Mammary epithelial cell (primary cell): ENCODE measurements at regions of chr5 and their contacts with region 1.

Region 1: DNA sequence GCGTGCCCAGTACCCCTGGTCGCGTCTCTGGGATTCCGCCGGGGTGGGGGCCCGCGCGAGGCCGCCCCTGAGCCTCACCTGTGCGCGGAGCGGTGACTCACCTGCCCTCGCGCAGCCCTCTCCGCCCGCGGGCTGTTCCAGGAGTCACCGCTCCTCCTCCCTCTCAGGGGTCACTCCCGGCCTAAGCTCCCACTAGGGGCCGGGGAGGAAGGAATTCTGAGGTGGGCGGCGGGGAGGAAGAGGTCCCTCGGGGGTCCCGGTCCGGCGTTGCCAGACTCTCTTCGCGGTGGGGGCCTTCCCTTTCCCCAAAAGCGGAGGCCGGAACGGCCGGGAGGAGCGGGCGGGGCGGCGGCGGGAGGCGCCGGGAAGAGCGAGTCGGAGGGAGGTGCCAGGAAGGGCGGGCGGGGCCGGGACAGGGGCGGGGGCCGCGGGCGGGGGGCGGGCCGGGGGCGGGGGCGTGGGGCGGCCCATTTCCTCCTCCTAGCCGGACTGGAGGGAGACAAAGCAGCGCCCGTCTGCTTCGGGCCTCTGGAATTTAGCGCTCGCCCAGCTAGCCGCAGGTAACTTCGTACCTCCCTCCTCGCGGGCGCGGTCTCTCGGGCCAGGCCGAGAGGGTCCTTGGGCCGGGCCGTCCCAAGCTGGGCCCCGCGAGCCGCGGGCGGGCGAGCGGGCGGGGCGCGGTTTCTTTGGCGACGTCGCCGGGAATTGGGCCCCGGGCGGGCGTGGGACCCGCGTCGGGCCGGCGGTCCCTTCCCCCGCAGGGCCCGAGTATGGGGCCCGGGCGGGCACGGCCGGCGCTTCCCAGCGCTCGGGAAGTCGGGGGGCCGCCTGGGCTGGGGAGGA is at the start of gene CTNNA1:
- DNase-seq: peak; percentile 83
- H3K4me3 ChIP-seq: peak within 1 kb of the TSS; percentile 88 to 99 (median 94)
- H3K27ac ChIP-seq: peak within 1 kb of the TSS; percentile 94
- H3K4me1 ChIP-seq: peaks cover 11% of the 10 kb centered on the region
- H3K27me3 ChIP-seq: no peaks in the 10 kb centered on the region
- CTCF ChIP-seq: no peak
- total RNA-seq, gene CTNNA1: 348 to 366 TPM

Region 2: DNA sequence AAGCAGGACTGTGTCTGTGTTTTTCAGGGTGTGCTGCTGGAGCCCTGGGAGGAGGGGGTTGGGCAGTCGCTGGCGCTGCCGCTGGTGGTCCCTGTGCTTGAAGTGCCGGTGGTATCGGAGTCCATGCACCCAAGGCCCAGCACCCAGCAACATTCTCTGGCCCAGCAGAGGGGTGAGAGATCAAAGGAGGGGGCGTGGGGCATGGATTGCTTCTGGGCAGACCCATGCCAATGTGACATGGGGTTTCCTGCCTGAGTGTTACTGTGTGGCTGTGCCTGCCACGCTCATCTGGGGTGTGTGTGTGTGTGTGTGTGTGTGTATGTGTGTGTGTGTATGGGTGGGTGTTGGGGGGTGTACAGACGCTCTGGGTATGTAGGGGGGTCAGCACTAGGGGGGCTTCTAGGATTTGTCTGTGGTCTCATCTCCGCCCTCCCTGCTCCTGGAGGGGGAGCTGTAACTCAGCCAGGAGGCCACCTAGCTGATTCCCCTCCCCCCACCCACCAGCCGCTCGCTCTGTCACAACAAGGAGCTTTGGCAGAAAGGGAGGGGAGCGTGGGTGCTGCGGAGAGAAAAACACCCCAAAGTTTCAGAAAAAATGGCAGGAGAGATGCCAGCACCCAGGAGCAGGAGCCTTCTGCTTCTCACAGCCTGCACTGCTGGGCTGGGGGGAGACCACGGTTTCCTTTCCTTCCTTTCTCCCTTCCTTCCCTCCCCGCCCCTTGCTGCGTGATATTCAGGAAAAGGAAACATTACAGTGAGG is 142.1 kb before region 1 on chr5:
- CTCF ChIA-PET with region 1: interaction called, 11 read pairs
- dilution Hi-C with region 1: no loop called
- in situ Hi-C with region 1: no loop called
- intact Hi-C with region 1: no loop called
- DNase-seq: no peak
- H3K4me3 ChIP-seq: no peak overlapping the region
- H3K27ac ChIP-seq: no peak overlapping the region
- H3K4me1 ChIP-seq: peaks cover 34% of the 10 kb centered on the region
- H3K27me3 ChIP-seq: no peaks in the 10 kb centered on the region
- CTCF ChIP-seq: no peak

Region 3: DNA sequence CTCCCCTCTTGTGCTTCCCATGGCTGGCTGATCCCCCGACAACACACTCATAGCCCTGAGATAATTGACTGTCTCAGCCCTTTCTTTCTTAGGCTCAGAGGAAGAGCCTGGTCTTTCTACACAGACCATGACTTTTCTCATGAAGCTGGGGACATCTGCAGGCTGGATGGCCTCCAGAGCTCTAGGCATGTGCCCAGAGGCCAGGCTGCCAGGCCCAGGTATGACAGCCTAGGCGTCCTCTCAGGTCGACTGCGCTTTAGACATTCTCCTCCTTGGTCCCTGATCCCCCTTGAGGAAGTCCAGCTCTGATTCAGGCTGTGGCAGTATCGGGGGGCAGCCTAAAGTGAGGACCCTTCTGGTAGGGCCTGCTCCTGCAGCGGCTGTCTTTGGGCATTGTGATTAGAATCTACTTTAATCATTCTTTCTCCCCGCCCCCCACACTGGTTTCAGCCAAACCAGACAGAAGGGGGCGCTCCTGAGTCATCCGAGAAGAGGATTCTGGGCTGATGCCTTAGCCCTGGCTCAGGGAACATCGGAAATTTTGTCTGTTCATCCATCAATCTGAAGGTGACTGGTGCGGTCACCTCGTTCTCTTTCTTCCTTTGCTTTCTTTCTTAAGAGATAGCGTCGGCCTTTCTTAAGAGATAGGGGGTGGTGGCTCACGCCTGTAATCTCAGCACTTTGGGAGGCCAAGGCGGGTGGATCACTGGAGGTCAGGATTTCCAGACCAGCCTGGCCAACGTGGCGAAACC is 111.4 kb before region 1 on chr5:
- CTCF ChIA-PET with region 1: no interaction called
- dilution Hi-C with region 1: no loop called
- in situ Hi-C with region 1: no loop called
- intact Hi-C with region 1: loop called (anchors 5 kb)
- DNase-seq: peak; percentile 51
- H3K4me3 ChIP-seq: no peak overlapping the region
- H3K27ac ChIP-seq: no peak overlapping the region
- H3K4me1 ChIP-seq: peaks cover 5% of the 10 kb centered on the region
- H3K27me3 ChIP-seq: no peaks in the 10 kb centered on the region
- CTCF ChIP-seq: peak; percentile 77 to 79

Region 4: DNA sequence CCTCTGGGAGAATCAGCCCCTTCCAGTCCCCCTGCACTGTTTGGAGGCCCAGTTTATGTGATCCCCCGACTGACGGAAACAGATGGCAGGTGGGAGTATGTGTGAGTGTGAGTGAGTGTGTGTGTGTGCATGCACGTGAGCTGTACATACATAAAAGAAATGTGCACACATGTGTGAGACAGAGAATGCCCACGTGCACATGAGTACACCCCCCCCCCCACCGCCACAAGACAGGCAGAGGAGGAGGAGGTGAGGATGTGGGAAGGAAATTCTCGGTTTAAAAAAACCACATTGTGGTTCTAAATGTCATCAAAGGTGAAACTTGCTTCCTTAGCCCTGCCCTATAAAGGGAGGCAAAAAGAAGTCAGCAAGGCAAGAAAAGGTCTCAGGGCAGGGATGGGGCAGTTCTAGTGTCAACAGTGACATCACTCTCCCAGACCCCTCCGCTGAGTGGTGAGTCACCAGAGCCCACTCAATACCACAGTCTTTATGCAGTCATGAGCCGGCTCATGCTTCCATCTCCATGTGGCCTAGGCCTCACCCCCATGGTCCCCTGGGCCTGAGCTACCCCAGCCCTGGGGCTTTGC is 98.8 kb before region 1 on chr5:
- CTCF ChIA-PET with region 1: no interaction called
- dilution Hi-C with region 1: no loop called
- in situ Hi-C with region 1: no loop called
- intact Hi-C with region 1: loop called (anchors 1 kb)
- DNase-seq: peak; percentile 55
- H3K4me3 ChIP-seq: no peak overlapping the region
- H3K27ac ChIP-seq: no peak overlapping the region
- H3K4me1 ChIP-seq: peaks cover 13% of the 10 kb centered on the region
- H3K27me3 ChIP-seq: no peaks in the 10 kb centered on the region
- CTCF ChIP-seq: no peak

Region 5: DNA sequence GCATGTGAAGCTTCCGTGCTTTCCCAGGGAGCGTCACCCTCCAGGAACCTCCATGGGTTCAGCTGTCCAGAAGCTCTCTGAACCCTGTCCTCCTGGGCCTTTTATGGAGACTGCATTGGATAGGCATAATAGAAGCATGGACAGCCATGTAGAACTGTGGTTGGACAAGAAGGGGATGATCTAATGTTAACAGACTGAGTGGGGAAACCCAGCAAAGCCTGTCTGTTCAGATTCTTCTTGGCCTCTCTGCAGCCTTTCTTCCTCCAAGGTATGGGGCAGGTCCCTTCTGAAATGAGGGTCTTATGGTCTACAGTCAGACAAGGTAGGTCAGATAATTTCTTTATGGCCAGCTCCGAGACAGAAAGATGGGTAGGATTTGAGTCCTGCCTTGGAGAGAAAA is 59.0 kb before region 1 on chr5:
- CTCF ChIA-PET with region 1: no interaction called
- dilution Hi-C with region 1: loop called (anchors 5 kb)
- in situ Hi-C with region 1: no loop called
- intact Hi-C with region 1: no loop called
- DNase-seq: no peak
- H3K4me3 ChIP-seq: no peak overlapping the region
- H3K27ac ChIP-seq: no peak overlapping the region
- H3K4me1 ChIP-seq: no peaks in the 10 kb centered on the region
- H3K27me3 ChIP-seq: no peaks in the 10 kb centered on the region
- CTCF ChIP-seq: no peak